ENCODE measurements at regions of chr12 and their contacts with region 1.

Region 1: GRCh38 chr12:3073438-3074250 is 3.5 kb upstream of the TSPAN9 start:
- DNase-seq: peak; percentile 90
- H3K4me3 ChIP-seq: no peak overlapping the region
- H3K27ac ChIP-seq: no peak overlapping the region
- H3K4me1 ChIP-seq: peaks cover 20% of the 10 kb centered on the region
- H3K27me3 ChIP-seq: peaks cover 0 to 3% of the 10 kb centered on the region in 2 experiments
- CTCF ChIP-seq: peak; percentile 94 to 98
- POLR2A ChIP-seq: no peak

Region 2: DNA sequence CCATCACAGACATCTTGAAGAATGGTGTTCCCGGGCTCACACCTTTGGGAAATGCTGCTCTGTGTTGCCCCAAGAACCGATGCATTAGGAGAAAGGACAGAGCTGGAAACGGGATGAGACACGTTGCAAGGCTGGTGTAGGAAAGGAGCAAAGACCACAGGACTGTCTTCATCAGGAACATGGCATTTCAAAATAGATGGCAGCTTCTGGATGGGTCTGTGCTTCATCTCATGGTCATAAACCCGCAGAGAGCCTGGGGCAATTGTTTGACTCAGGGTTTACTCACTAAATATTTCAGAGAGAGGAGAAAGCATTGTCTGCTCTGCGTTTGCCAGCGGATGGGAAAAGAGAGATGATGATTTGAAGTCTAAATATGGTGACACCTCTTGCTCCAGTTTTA is 944.6 kb before region 1 on chr12:
- CTCF ChIA-PET with region 1: no interaction called
- POLR2A ChIA-PET with region 1: no interaction called
- dilution Hi-C with region 1: no loop called
- intact Hi-C with region 1: no loop called
- DNase-seq: no peak
- H3K4me3 ChIP-seq: no peak overlapping the region
- H3K27ac ChIP-seq: no peak overlapping the region
- H3K4me1 ChIP-seq: no peaks in the 10 kb centered on the region
- H3K27me3 ChIP-seq: no peaks in the 10 kb centered on the region
- CTCF ChIP-seq: no peak
- POLR2A ChIP-seq: no peak

Region 3: GRCh38 chr12:2804393-2805142 is 269.1 kb before region 1 on chr12:
- CTCF ChIA-PET with region 1: no interaction called
- POLR2A ChIA-PET with region 1: no interaction called
- dilution Hi-C with region 1: no loop called
- intact Hi-C with region 1: no loop called
- DNase-seq: peak; percentile 35
- H3K4me3 ChIP-seq: no peak overlapping the region
- H3K27ac ChIP-seq: no peak overlapping the region
- H3K4me1 ChIP-seq: peaks cover 6% of the 10 kb centered on the region
- H3K27me3 ChIP-seq: no peaks in the 10 kb centered on the region
- CTCF ChIP-seq: no peak
- POLR2A ChIP-seq: no peak

Region 4: GRCh38 chr12:2959505-2960389 is 113.9 kb before region 1 on chr12:
- CTCF ChIA-PET with region 1: no interaction called
- POLR2A ChIA-PET with region 1: no interaction called
- dilution Hi-C with region 1: no loop called
- intact Hi-C with region 1: no loop called
- DNase-seq: peak; percentile 72
- H3K4me3 ChIP-seq: peak overlapping the region; percentile 55 to 75 (median 65)
- H3K27ac ChIP-seq: peak overlapping the region; percentile 69
- H3K4me1 ChIP-seq: peaks cover 45% of the 10 kb centered on the region
- H3K27me3 ChIP-seq: no peaks in the 10 kb centered on the region
- CTCF ChIP-seq: no peak
- POLR2A ChIP-seq: no peak

Region 5: GRCh38 chr12:3034067-3034750 is 39.4 kb before region 1 on chr12:
- CTCF ChIA-PET with region 1: interaction called, 10 read pairs
- POLR2A ChIA-PET with region 1: no interaction called
- dilution Hi-C with region 1: no loop called
- intact Hi-C with region 1: no loop called
- DNase-seq: peak; percentile 78
- H3K4me3 ChIP-seq: no peak overlapping the region
- H3K27ac ChIP-seq: no peak overlapping the region
- H3K4me1 ChIP-seq: peaks cover 21% of the 10 kb centered on the region
- H3K27me3 ChIP-seq: no peaks in the 10 kb centered on the region
- CTCF ChIP-seq: peak; percentile 76 to 90
- POLR2A ChIP-seq: no peak

Region 6: DNA sequence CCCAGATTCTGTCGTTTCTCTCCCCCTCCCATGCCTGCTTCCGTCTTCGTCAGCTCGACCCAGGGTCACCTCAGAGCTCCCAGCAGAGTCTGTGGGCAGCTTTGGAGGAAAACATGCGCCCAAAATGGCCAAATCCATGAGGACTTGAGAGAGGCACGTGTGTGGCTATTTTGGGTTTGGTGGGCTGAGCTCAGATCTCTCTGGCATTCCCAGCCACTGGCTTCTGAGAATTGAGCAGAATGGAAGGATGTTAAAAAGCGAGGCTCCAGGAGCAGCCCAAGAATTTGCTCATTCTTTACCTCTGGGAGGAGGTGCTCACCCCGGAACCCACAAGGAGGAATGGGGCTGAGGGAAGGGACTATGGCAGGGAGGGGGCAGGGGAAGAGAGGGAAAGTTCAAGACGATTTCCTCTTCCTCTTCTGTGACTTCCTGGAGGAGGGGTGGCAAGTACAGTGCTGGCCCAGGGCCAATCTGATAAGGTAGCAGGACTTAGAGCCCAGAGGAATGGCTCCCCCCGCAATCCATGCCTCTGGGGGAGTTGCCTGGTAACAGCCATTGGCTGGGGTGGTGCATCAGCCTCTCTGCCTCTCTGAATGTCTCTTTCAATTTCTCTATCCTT is 23.7 kb after region 1 on chr12:
- CTCF ChIA-PET with region 1: interaction called, 13 read pairs
- POLR2A ChIA-PET with region 1: interaction called, 3 read pairs
- dilution Hi-C with region 1: no loop called
- intact Hi-C with region 1: loop called (anchors 1 kb)
- DNase-seq: peak; percentile 87
- H3K4me3 ChIP-seq: no peak overlapping the region
- H3K27ac ChIP-seq: peak overlapping the region; percentile 73
- H3K4me1 ChIP-seq: peaks cover 27% of the 10 kb centered on the region
- H3K27me3 ChIP-seq: no peaks in the 10 kb centered on the region
- CTCF ChIP-seq: no peak
- POLR2A ChIP-seq: peak; percentile 57

Region 7: GRCh38 chr12:3122835-3123678 is 49.4 kb after region 1 on chr12:
- CTCF ChIA-PET with region 1: interaction called, 62 read pairs
- POLR2A ChIA-PET with region 1: interaction called, 5 read pairs
- dilution Hi-C with region 1: no loop called
- intact Hi-C with region 1: loop called (anchors 1 kb)
- DNase-seq: peak; percentile 98
- H3K4me3 ChIP-seq: no peak overlapping the region
- H3K27ac ChIP-seq: peak overlapping the region; percentile 65
- H3K4me1 ChIP-seq: peaks cover 18% of the 10 kb centered on the region
- H3K27me3 ChIP-seq: no peaks in the 10 kb centered on the region
- CTCF ChIP-seq: peak; percentile 15 to 41
- POLR2A ChIP-seq: peak; percentile 72

Region 8: GRCh38 chr12:3141339-3142321 is 68.0 kb after region 1 on chr12:
- CTCF ChIA-PET with region 1: interaction called, 65 read pairs
- POLR2A ChIA-PET with region 1: no interaction called
- dilution Hi-C with region 1: no loop called
- intact Hi-C with region 1: no loop called
- DNase-seq: no peak
- H3K4me3 ChIP-seq: no peak overlapping the region
- H3K27ac ChIP-seq: no peak overlapping the region
- H3K4me1 ChIP-seq: no peaks in the 10 kb centered on the region
- H3K27me3 ChIP-seq: no peaks in the 10 kb centered on the region
- CTCF ChIP-seq: no peak
- POLR2A ChIP-seq: no peak

Region 9: GRCh38 chr12:3218228-3219171 is 144.9 kb after region 1 on chr12:
- CTCF ChIA-PET with region 1: interaction called, 9 read pairs
- POLR2A ChIA-PET with region 1: no interaction called
- dilution Hi-C with region 1: no loop called
- intact Hi-C with region 1: loop called (anchors 5 kb)
- DNase-seq: peak; percentile 88
- H3K4me3 ChIP-seq: no peak overlapping the region
- H3K27ac ChIP-seq: peak overlapping the region; percentile 65
- H3K4me1 ChIP-seq: peaks cover 29% of the 10 kb centered on the region
- H3K27me3 ChIP-seq: no peaks in the 10 kb centered on the region
- CTCF ChIP-seq: peak in 1 of 2 donors; percentile 4
- POLR2A ChIP-seq: no peak

Region 10: GRCh38 chr12:3432176-3432742 is 358.6 kb after region 1 on chr12:
- CTCF ChIA-PET with region 1: no interaction called
- POLR2A ChIA-PET with region 1: no interaction called
- dilution Hi-C with region 1: no loop called
- intact Hi-C with region 1: no loop called
- DNase-seq: no peak
- H3K4me3 ChIP-seq: no peak overlapping the region
- H3K27ac ChIP-seq: no peak overlapping the region
- H3K4me1 ChIP-seq: no peaks in the 10 kb centered on the region
- H3K27me3 ChIP-seq: no peaks in the 10 kb centered on the region
- CTCF ChIP-seq: no peak
- POLR2A ChIP-seq: no peak

Measured in endothelial cell of umbilical vein (primary cell).